ENCODE measurements at regions of chr6 and their contacts with region 1.

Region 1: DNA sequence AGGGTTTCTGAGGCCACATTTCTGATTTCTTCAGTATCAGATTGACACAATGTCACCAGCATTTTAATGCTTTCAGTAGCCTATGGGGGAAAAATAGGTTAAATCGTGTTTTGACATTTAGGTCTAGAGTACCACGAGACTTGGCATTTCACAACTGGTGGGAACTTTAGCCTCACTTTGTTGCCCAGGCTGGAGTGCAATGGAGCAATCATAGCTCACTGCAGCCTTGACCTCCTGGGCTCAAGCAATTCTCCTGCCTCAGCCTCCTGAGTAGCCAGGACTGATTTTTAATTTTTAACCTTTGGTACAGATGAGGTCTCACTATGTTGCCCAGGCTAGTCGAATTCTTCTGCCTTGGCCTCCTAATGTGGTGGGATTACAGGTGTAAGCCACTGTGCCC is 11.0 kb upstream of the ARMH2 start:
- DNase-seq: no peak
- ATAC-seq: no peak
- H3K4me3 ChIP-seq: no peak overlapping the region
- H3K4me3 Mint-ChIP-seq: no peak overlapping the region
- H3K27ac ChIP-seq: no peak overlapping the region
- H3K27ac Mint-ChIP-seq: no peak overlapping the region
- H3K4me1 ChIP-seq: no peaks in the 10 kb centered on the region
- H3K4me1 Mint-ChIP-seq: peaks cover 0 to 3% (median 0%) of the 10 kb centered on the region in 3 donors
- H3K27me3 ChIP-seq: no peaks in the 10 kb centered on the region
- H3K27me3 Mint-ChIP-seq: no peaks in the 10 kb centered on the region

Region 2: GRCh38 chr6:24673625-24674024 is 136.1 kb before region 1 on chr6:
- CTCF ChIA-PET with region 1: no interaction called
- POLR2A ChIA-PET with region 1: no interaction called
- DNase-seq: no peak
- ATAC-seq: no peak
- H3K4me3 ChIP-seq: no peak overlapping the region
- H3K4me3 Mint-ChIP-seq: no peak overlapping the region
- H3K27ac ChIP-seq: no peak overlapping the region
- H3K27ac Mint-ChIP-seq: no peak overlapping the region
- H3K4me1 ChIP-seq: no peaks in the 10 kb centered on the region
- H3K4me1 Mint-ChIP-seq: peaks cover 6 to 9% (median 8%) of the 10 kb centered on the region in 3 donors
- H3K27me3 ChIP-seq: no peaks in the 10 kb centered on the region
- H3K27me3 Mint-ChIP-seq: no peaks in the 10 kb centered on the region

Region 3: DNA sequence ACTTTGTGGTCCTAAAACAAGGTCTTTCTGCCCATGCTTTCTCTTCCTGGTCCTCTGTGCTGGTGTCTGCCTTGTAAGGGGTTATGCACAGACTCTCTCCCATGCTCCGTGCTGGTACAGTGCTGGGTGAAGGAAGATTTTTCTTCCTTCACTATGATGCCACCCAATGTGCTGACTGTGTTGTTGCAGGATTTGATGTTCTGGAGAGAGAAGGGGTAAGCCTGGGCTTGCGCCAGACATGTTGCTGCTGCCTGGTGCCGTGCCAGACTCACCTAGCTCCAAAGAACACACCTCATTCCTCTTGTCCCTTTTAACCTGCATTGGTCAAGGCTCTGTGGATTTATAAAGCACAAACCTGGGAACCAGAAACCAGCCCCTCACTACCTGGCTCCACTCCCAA is 17.4 kb after region 1 on chr6:
- CTCF ChIA-PET with region 1: no interaction called
- POLR2A ChIA-PET with region 1: no interaction called
- DNase-seq: no peak
- ATAC-seq: no peak
- H3K4me3 ChIP-seq: no peak overlapping the region
- H3K4me3 Mint-ChIP-seq: peak overlapping the region in 1 of 3 donors; percentile 34
- H3K27ac ChIP-seq: no peak overlapping the region
- H3K27ac Mint-ChIP-seq: peak overlapping the region; percentile 59 to 80
- H3K4me1 ChIP-seq: peaks cover 0 to 9% of the 10 kb centered on the region in 2 experiments
- H3K4me1 Mint-ChIP-seq: peaks cover 19 to 29% (median 27%) of the 10 kb centered on the region in 3 donors
- H3K27me3 ChIP-seq: no peaks in the 10 kb centered on the region
- H3K27me3 Mint-ChIP-seq: no peaks in the 10 kb centered on the region

Region 4: GRCh38 chr6:25122001-25122400 is 312.3 kb after region 1 on chr6:
- CTCF ChIA-PET with region 1: no interaction called
- POLR2A ChIA-PET with region 1: interaction called in 1 of 2 experiments, 16 read pairs
- DNase-seq: no peak
- ATAC-seq: no peak
- H3K4me3 ChIP-seq: no peak overlapping the region
- H3K4me3 Mint-ChIP-seq: no peak overlapping the region
- H3K27ac ChIP-seq: no peak overlapping the region
- H3K27ac Mint-ChIP-seq: no peak overlapping the region
- H3K4me1 ChIP-seq: peaks cover 4 to 8% of the 10 kb centered on the region in 2 experiments
- H3K4me1 Mint-ChIP-seq: peaks cover 29 to 51% (median 44%) of the 10 kb centered on the region in 3 donors
- H3K27me3 ChIP-seq: no peaks in the 10 kb centered on the region
- H3K27me3 Mint-ChIP-seq: no peaks in the 10 kb centered on the region